Heart left ventricle (tissue), 16 donors: ENCODE measurements at regions of chr20 and their contacts with region 1.

Region 1: GRCh38 chr20:9160757-9161156 is 91.9 kb downstream of the PLCB4 start:
- DNase-seq: no peak
- ATAC-seq: peak; percentile 47 to 71 (median 66)
- H3K4me3 ChIP-seq: peak overlapping the region in 5 of 12 donors; percentile 2 to 23 (median 12)
- H3K27ac ChIP-seq: peak overlapping the region in 11 of 12 donors; percentile 1 to 58 (median 35)
- H3K4me1 ChIP-seq: peaks cover 0 to 43% (median 19%) of the 10 kb centered on the region in 12 donors
- H3K27me3 ChIP-seq: no peaks in the 10 kb centered on the region
- CTCF ChIP-seq: no peak
- POLR2A ChIP-seq: no peak

Region 2: DNA sequence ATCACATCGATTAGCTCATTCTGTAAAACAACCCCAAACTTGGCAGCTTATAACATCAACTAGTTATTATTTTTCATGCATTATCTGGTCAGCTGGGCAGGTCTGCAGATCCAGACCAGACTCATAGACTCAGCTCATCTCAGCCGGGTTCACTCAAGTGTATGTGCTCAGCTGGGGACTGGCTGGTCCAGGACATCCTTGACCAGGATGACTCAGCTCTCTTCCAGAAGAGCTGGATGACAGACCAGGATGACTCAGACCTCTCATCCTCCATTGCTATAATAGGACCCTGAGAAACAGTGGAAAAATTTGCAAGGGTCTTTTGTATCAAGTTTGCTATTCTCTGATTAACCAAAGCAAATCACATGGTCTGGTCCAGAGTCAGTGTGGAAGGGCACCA is 404.3 kb before region 1 on chr20:
- intact Hi-C with region 1: no loop called
- DNase-seq: peak in 1 of 5 donors; percentile 50
- ATAC-seq: peak in 2 of 4 donors; percentile 86 to 90
- H3K4me3 ChIP-seq: no peak overlapping the region
- H3K27ac ChIP-seq: no peak overlapping the region
- H3K4me1 ChIP-seq: peaks cover 0 to 16% (median 0%) of the 10 kb centered on the region in 12 donors
- H3K27me3 ChIP-seq: no peaks in the 10 kb centered on the region
- CTCF ChIP-seq: no peak
- POLR2A ChIP-seq: no peak

Region 3: DNA sequence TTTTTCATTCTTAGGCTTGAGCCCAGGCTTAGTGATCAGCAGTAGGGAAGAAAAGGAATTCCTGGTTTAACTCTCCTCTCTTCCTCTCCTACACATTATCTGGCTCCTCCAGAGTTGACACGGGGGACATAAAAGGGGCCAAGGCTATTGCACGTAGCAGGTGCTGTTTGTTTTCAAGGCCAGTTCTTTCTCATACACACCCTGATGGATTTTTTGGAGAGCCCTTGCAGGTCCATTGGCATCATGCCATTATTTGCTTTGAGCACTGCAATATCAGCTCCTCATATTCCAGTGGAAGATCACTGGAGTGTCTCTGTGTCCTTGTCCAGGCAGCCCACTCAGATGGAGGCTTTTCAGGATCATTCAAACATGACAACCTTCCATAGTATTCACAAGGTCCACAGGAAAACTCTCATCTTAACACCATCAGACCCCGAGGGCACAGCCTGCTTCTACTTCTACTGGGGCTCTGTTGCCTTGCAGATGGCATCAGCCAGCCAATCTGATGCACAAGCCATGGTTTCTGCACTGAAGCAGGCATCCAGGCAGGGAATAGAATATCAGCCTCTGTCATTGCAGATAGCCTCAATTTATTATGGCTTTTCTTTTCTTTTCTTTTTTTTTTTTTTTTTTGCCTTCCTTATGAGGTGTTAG is 73.1 kb before region 1 on chr20:
- intact Hi-C with region 1: no loop called
- DNase-seq: no peak
- ATAC-seq: no peak
- H3K4me3 ChIP-seq: no peak overlapping the region
- H3K27ac ChIP-seq: no peak overlapping the region
- H3K4me1 ChIP-seq: peaks cover 0 to 62% (median 34%) of the 10 kb centered on the region in 12 donors
- H3K27me3 ChIP-seq: no peaks in the 10 kb centered on the region
- CTCF ChIP-seq: no peak
- POLR2A ChIP-seq: no peak

Region 4: GRCh38 chr20:9119776-9120175 is 41.0 kb before region 1 on chr20:
- intact Hi-C with region 1: loop called in 1 of 10 experiments (anchors 10 kb)
- DNase-seq: peak; percentile 52 to 81 (median 64)
- ATAC-seq: peak; percentile 96 to 98 (median 96)
- H3K4me3 ChIP-seq: peak overlapping the region in 1 of 12 donors; percentile 6
- H3K27ac ChIP-seq: peak overlapping the region in 10 of 12 donors; percentile 6 to 79 (median 60)
- H3K4me1 ChIP-seq: peaks cover 0 to 23% (median 5%) of the 10 kb centered on the region in 12 donors
- H3K27me3 ChIP-seq: no peaks in the 10 kb centered on the region
- CTCF ChIP-seq: no peak
- POLR2A ChIP-seq: no peak

Region 5: GRCh38 chr20:9215539-9215938 is 54.8 kb after region 1 on chr20:
- intact Hi-C with region 1: loop called in 1 of 10 experiments (anchors 10 kb)
- DNase-seq: no peak
- ATAC-seq: no peak
- H3K4me3 ChIP-seq: no peak overlapping the region
- H3K27ac ChIP-seq: no peak overlapping the region
- H3K4me1 ChIP-seq: peaks cover 0 to 35% (median 15%) of the 10 kb centered on the region in 12 donors
- H3K27me3 ChIP-seq: no peaks in the 10 kb centered on the region
- CTCF ChIP-seq: peak in 5 of 12 donors; percentile 16 to 43 (median 25)
- POLR2A ChIP-seq: no peak